ENCODE measurements at regions of chr9 and their contacts with region 1.

Region 1: GRCh38 chr9:127734747-127735529 is at the start of gene TOR2A:
- DNase-seq: peak; percentile 99
- ATAC-seq: peak; percentile 96
- H3K4me3 ChIP-seq: peak within 1 kb of the TSS; percentile 82
- H3K27ac ChIP-seq: peak within 1 kb of the TSS; percentile 96
- H3K4me1 ChIP-seq: peaks cover 9% of the 10 kb centered on the region
- H3K27me3 ChIP-seq: no peaks in the 10 kb centered on the region
- CTCF ChIP-seq: peak; percentile 90
- total RNA-seq, gene TOR2A: 17.3 TPM

Region 2: DNA sequence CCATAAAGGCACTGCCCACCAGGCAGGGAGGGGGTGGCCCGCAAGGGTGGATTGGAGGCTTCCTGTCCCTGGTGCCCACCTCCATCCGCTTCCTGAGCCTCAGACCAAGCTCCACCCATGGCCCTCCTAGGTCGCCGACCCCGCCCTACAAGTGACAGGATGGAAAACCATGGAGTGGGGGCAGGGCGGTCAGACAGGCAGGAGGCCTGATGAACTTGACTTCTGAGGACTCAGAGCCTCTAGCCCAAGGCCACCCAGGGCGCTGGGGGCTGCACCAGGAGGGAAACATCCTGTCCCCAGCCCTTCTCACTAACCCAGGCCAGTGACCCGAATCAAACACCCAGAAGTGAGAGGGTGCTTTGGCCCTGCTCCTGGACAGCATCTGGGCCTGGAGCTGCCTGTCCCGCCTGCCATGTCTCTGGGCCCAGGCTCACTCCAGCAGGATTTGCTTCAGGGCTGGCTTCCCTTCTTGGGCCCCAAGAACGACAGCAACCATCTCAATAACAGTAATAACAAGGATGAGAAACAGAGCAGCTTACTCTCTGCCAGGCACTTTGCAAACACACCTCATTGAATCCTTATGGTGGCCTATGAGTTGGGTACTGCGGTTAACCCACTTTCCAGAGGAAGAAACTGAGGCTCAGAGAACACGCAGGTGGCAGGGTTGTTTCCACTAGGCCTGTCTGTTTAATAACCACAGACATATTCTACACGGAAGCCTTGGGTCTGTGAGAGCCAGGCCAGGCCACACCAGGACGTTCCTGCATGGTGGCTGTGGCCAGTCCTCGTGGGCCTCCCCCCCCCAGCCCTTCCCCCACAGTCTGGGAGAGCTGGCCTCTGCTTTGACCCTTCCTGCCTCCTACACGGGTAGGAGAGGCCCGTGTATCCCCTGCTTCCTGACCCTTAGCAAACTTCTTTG is 168.9 kb after region 1 on chr9:
- intact Hi-C with region 1: no loop called
- DNase-seq: peak; percentile 90
- ATAC-seq: peak; percentile 58
- H3K4me3 ChIP-seq: peak overlapping the region; percentile 31
- H3K27ac ChIP-seq: peak overlapping the region; percentile 90
- H3K4me1 ChIP-seq: peaks cover 80% of the 10 kb centered on the region
- H3K27me3 ChIP-seq: no peaks in the 10 kb centered on the region
- CTCF ChIP-seq: no peak

Region 3: DNA sequence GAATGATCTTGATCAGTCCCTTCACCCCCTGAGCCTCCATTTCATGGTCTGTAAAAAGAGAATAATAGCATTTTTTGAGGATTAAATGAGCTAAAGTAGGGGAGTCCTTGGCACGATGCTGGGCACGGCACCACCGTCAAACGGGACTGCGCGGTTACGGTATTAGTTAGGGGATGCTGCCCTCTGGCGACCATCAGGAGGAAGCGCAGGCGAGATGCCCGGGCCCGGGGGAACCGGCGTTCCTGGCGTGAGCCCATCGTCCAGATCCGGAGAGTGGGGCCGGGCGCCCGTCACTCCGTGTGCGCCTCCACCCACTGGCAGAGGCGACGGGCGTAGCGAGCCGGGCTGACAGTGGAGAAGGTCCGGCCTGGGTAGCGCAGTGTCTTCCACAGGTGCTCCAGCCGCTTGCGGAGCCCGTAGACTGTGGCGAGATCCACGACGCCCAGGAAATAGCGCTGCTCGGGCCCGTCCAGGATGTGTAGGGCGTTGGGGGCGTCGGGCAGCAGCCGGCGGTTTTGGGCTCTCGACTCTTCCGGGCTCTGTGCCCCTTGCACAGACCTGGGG is 186.7 kb after region 1 on chr9:
- intact Hi-C with region 1: loop called (anchors 10 kb)
- DNase-seq: peak; percentile 86
- ATAC-seq: peak; percentile 59
- H3K4me3 ChIP-seq: peak overlapping the region; percentile 30
- H3K27ac ChIP-seq: no peak overlapping the region
- H3K4me1 ChIP-seq: peaks cover 40% of the 10 kb centered on the region
- H3K27me3 ChIP-seq: peaks cover 1% of the 10 kb centered on the region
- CTCF ChIP-seq: peak; percentile 98